ENCODE measurements at regions of chr5 and their contacts with region 1.

Region 1: DNA sequence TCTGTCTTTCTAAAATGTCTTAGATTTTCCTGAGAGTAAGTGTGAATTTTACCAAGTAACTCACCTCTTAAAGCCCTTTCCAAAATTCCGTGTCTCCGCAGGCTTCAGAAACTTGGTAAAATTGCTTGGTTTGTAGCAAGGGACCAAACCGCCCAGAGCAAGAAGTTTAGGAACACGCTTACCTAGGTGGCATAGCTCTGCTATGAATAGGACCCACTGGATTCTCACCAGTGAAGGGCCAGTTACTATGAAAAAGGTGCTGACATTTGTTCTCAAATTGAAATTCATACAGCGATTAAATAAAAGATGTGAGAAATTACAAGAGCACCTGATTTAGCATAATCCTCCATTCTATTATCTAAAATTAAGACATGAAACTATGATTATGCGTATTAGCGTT is 6.7 kb downstream of the NME5 start:
- DNase-seq: no peak
- H3K4me3 ChIP-seq: peak overlapping the region in 1 of 4 donors; percentile 39
- H3K27ac ChIP-seq: no peak overlapping the region
- H3K4me1 ChIP-seq: no peaks in the 10 kb centered on the region
- H3K27me3 ChIP-seq: peaks cover 0 to 4% (median 0%) of the 10 kb centered on the region in 3 donors
- CTCF ChIP-seq: no peak
- EP300 ChIP-seq: no peak
- POLR2A ChIP-seq: no peak

Region 2: DNA sequence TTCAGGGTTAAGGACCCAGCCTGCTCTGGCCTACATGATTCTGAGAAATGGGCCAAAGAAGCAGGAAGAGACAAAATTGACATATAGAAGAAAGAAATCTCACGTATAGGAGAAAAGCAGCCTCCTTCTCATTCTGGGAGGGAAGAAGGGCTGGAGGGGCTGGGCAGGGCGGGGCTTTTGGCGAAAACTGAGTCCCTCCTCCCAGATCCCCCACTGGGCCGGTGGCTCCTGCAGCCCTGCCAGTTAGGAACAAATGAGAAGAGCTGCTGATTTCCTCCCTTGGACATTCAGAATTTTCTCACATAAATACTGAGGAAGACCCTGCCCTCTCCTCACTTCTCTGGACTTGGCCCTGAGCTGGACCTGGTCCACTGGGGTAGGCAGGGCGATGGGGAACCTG is 48.8 kb before region 1 on chr5 and contains the start of gene WNT8A:
- intact Hi-C with region 1: loop called (anchors 5 kb)
- DNase-seq: no peak
- H3K4me3 ChIP-seq: no peak within 1 kb of the TSS
- H3K27ac ChIP-seq: no peak within 1 kb of the TSS
- H3K4me1 ChIP-seq: no peaks in the 10 kb centered on the region
- H3K27me3 ChIP-seq: no peaks in the 10 kb centered on the region
- CTCF ChIP-seq: no peak
- EP300 ChIP-seq: no peak
- POLR2A ChIP-seq: no peak
- total RNA-seq, gene WNT8A: not detected

Region 3: DNA sequence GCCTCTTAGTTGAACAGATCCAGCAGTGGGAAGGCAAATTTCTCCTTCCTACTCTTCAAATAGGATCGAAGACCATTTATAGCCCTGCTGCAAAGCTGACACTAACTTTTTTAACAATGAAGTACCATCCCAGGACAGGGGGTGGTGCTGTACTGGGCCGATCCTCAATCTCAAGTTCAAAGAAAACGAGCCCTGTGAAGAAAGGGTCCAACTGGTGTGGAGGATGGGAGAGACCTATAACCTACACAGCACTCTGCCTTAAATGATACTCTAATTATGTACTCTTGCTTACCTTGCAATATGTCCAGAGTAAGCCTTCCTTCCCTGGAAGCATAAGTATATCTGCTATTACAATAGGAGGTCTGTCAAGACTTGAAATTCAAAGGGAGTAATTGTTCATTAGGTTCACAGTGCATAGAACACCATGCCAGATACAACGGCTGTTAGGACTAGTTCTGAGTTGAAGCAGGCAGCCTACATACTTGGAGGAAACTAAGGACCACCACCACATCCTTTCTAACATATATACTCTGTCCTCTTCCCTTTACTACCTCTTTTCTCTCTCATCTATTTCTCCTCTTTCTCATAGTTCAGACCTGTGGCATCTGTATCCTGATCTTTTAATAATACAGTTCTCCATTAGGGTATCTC is 404.2 kb after region 1 on chr5:
- intact Hi-C with region 1: no loop called
- DNase-seq: peak in 1 of 2 donors; percentile 19
- H3K4me3 ChIP-seq: no peak overlapping the region
- H3K27ac ChIP-seq: no peak overlapping the region
- H3K4me1 ChIP-seq: peaks cover 24 to 96% (median 57%) of the 10 kb centered on the region in 4 donors
- H3K27me3 ChIP-seq: no peaks in the 10 kb centered on the region
- CTCF ChIP-seq: no peak
- EP300 ChIP-seq: no peak
- POLR2A ChIP-seq: no peak